HEK293 (cell line): ENCODE measurements at regions of chr5 and their contacts with region 1.

Region 1: GRCh38 chr5:172714491-172715421 is 56.2 kb downstream of the DUSP1 start:
- H3K4me3 ChIP-seq: no peak overlapping the region
- H3K27ac ChIP-seq: no peak overlapping the region
- H3K4me1 ChIP-seq: no peaks in the 10 kb centered on the region
- CTCF ChIP-seq: peak; percentile 68; the same call in 1 of the 2 replicates

Region 2: GRCh38 chr5:171023508-171023907 is 1691.2 kb before region 1 on chr5:
- CTCF ChIA-PET with region 1: no interaction called
- POLR2A ChIA-PET with region 1: no interaction called
- H3K4me3 ChIP-seq: no peak overlapping the region
- H3K27ac ChIP-seq: no peak overlapping the region
- H3K4me1 ChIP-seq: no peaks in the 10 kb centered on the region
- CTCF ChIP-seq: no peak

Region 3: DNA sequence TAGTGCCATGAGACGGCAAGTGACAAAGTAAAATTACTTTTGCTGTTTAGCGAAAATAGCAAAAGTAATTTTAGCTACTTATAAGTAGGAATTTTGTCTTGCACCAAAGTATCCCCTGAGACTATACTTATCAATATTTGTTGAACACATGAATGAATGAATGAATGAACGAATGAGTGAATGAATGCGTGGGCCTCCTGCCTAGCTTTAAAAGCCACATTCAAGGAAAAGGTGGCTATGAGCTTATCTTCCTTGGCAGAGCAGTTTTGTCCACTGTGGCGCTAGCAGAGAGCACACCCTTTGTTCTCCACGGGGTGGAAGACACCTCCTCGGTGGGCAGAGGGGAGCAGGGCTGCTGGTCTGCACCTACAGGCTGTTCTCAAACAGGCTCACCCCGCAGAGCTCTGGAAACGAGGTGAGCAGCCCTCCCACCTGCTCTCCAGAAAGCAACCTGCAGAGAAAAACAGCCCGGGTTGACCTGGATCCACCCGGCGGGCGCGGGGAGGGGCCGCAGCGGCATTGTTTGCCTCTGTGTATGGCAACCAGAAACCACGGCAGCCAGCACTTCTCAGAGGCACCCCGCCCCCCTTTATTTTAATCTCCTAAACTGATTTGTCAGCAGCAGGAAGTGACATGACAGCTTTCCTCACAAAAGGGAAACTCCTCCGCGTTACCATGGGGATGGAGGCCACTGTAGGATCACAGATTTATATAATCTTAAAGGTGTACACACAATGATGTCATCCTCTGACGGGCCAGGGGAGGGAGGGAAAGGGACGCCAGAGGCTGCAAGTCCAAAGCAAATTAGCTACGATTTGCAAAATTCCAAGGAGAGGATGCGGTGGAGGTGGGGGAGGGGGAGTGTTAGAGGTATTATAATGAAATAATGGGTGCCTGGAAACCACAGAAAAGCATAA is 50.4 kb after region 1 on chr5:
- CTCF ChIA-PET with region 1: interaction called, 45 read pairs
- POLR2A ChIA-PET with region 1: interaction called, 45 read pairs
- H3K4me3 ChIP-seq: peak overlapping the region; percentile 25
- H3K27ac ChIP-seq: peak overlapping the region; percentile 68
- H3K4me1 ChIP-seq: peaks cover 22% of the 10 kb centered on the region; the same call in 1 of the 2 replicates
- CTCF ChIP-seq: peak; percentile 36; the same call in 1 of the 2 replicates

Region 4: DNA sequence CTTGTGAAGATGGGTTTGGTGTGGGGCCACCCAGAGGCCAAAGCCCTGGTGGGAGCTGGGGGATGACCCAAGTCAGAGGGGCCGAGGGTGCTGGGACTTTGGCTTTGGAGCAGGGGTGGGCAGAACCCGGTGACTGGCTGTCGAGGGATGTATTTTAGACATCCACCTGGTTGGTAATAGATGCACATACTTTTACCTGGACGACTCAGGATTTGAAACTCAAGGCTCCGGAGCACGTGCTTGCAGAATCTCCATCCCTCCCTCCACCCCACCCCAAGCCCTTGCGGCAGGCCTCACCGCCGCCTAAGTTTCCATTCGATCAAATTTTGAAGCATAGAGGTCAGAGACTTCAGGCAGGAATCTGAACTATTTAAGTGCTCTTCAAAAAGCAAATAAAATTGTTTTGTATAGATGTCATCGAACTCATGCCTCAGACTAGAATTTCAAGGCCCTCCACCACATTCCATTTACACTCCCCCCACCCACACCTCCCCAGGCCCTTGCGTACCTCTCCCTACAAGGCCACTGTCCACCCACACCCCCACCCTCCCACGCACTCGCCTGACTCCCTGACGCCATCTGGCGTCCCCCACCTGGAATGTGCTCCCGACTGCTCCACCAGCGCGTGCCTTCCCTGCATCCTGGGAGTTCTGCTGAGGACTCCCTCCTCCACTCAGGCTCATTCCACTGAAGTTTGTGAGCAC is 187.9 kb after region 1 on chr5:
- CTCF ChIA-PET with region 1: interaction called, 17 read pairs
- POLR2A ChIA-PET with region 1: no interaction called
- H3K4me3 ChIP-seq: no peak overlapping the region
- H3K27ac ChIP-seq: no peak overlapping the region
- H3K4me1 ChIP-seq: peaks cover 14% of the 10 kb centered on the region; the same call in 1 of the 2 replicates
- CTCF ChIP-seq: peak; percentile 40

Region 5: DNA sequence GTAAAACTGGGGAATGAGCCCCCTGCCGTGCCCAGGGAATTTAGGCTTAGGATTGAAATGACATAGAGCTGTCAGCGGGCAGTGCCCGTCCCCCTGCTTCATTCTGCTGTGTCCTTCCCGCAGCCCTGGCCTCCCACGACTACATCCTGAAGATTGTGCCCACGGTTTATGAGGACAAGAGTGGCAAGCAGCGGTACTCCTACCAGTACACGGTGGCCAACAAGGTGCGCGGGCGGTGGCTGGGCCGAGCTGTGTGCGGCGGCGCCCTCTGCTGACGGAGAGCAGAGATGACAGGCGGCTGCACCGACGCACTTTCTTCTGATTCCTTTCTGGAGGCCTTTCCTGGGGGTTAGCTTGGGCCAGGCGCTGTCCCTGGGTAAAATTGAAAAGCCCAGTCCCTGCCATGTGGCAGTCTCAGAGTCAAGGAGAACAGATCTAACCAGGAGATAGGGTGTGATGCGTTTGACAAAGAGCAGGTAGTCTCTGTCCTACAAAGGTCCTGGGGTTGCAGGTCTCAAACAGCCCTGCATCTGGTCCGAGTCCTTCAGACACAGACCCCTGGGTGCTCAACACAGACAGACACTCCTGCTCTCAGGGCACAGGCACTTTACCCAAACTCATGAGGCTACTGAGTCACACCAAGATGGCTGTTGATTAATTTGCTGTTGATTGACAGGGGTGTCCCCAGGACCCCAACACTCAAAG is 217.7 kb after region 1 on chr5:
- CTCF ChIA-PET with region 1: interaction called, 214 read pairs
- POLR2A ChIA-PET with region 1: interaction called, 5 read pairs
- H3K4me3 ChIP-seq: no peak overlapping the region
- H3K27ac ChIP-seq: no peak overlapping the region
- H3K4me1 ChIP-seq: no peaks in the 10 kb centered on the region
- CTCF ChIP-seq: peak; percentile 88